ENCODE measurements at regions of chr20 and their contacts with region 1.

Region 1: GRCh38 chr20:2849529-2849928 is 9.0 kb downstream of the VPS16 start:
- DNase-seq: no peak
- ATAC-seq: no peak
- H3K4me3 ChIP-seq: no peak overlapping the region
- H3K27ac ChIP-seq: no peak overlapping the region
- H3K4me1 ChIP-seq: peaks cover 5% of the 10 kb centered on the region; the same call in 1 of the 2 replicates
- H3K27me3 ChIP-seq: no peaks in the 10 kb centered on the region
- CTCF ChIP-seq: no peak
- EP300 ChIP-seq: no peak
- POLR2A ChIP-seq: no peak
- RAD21 ChIP-seq: no peak

Region 2: DNA sequence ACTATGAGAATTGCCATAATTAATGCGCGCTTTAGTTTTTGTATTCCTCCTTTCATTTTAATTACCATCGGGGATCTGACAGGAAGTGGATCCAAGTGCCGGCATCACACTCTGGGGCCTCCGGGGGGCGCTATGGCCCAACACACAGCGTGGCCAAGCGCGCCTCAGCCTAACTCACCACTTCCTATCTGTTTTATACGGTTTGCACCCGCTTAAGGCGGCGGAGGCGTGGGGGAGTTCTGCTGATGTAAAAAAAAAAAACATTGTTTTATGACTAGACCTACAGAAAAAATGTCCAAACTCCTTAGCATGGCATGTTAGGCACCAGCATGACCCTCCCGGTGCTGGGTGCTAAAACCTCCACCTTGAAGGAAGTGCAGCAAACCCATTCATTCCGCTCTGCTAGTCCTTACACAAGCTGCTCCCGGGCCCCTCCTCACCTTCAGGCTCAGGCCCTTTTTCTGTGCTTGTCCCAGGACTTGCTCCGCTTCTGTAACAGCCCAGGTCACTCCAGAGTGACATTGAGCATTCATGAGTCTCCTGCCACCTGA is 161.4 kb before region 1 on chr20:
- CTCF ChIA-PET with region 1: interaction called, 11 read pairs
- POLR2A ChIA-PET with region 1: no interaction called
- RAD21 ChIA-PET with region 1: interaction called, 3 read pairs
- SMC1A ChIA-PET with region 1: no interaction called
- in situ Hi-C with region 1: no loop called
- intact Hi-C with region 1: no loop called
- DNase-seq: no peak
- ATAC-seq: peak; percentile 75
- H3K4me3 ChIP-seq: no peak overlapping the region
- H3K27ac ChIP-seq: no peak overlapping the region
- H3K4me1 ChIP-seq: no peaks in the 10 kb centered on the region
- H3K27me3 ChIP-seq: peaks cover 7 to 10% of the 10 kb centered on the region in 2 experiments
- CTCF ChIP-seq: peak; percentile 57 to 62 (median 57)
- EP300 ChIP-seq: no peak
- POLR2A ChIP-seq: no peak
- RAD21 ChIP-seq: peak; percentile 69

Region 3: DNA sequence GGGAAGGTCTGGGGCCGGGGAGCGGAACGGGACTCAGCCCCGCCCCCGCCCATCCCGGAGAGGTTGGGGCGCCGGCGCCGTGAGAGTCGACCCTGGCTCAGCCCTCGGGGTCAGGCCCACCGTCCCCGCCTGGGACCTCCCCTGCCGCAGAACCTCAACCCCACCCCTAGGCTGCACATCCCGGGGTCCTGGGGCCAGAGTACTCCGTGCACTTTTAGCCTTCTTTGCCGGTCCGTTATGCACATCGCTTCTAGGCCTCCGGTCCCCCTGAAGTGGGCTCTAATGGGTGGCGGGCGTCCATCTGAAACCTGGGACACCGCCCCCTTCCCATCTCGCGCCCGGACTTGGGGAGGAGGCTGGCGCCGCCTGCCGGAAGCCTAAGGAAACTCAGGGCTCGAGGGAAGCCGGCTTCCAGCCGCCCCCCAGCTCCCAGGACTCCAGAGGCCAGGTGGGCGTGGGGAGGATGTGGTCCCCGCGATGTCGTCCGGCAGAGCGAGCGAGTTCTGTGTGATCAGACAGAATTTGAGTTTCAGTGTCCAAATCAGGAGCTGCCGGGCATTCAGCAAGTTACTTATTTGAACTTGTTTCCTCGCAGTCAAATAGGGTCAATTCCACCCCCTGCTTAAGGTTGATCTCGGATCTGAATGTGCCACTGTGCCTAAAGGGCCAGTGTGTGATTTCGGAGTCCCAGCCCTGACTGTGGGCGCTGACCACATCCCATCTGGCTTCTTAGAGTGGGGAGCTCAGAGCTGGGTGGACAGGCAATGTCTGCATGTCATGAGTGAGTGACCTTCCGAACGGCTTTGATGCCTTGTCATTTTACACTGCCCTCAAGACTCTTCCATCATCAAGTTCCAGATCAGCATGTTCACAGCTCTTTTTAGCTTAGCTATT is 96.7 kb before region 1 on chr20:
- CTCF ChIA-PET with region 1: interaction called, 3 read pairs
- POLR2A ChIA-PET with region 1: no interaction called
- RAD21 ChIA-PET with region 1: interaction called, 3 read pairs
- SMC1A ChIA-PET with region 1: no interaction called
- in situ Hi-C with region 1: no loop called
- intact Hi-C with region 1: loop called (anchors 1 kb)
- DNase-seq: no peak
- ATAC-seq: peak; percentile 11; the same call in 1 of the 3 replicates
- H3K4me3 ChIP-seq: peak overlapping the region; percentile 41; the same call in 1 of the 2 replicates
- H3K27ac ChIP-seq: no peak overlapping the region
- H3K4me1 ChIP-seq: peaks cover 6% of the 10 kb centered on the region
- H3K27me3 ChIP-seq: peaks cover 9 to 12% of the 10 kb centered on the region in 2 experiments
- CTCF ChIP-seq: peak; percentile 36 to 70 (median 64)
- EP300 ChIP-seq: no peak
- POLR2A ChIP-seq: no peak
- RAD21 ChIP-seq: peak; percentile 23; the same call in 1 of the 2 replicates

Region 4: GRCh38 chr20:3340443-3340842 is 490.9 kb after region 1 on chr20:
- CTCF ChIA-PET with region 1: no interaction called
- POLR2A ChIA-PET with region 1: no interaction called
- RAD21 ChIA-PET with region 1: no interaction called
- SMC1A ChIA-PET with region 1: no interaction called
- in situ Hi-C with region 1: no loop called
- intact Hi-C with region 1: no loop called
- DNase-seq: no peak
- ATAC-seq: no peak
- H3K4me3 ChIP-seq: no peak overlapping the region
- H3K27ac ChIP-seq: no peak overlapping the region
- H3K4me1 ChIP-seq: no peaks in the 10 kb centered on the region
- H3K27me3 ChIP-seq: peaks cover 0 to 1% of the 10 kb centered on the region in 2 experiments; a peak in 2 of 4 replicates
- CTCF ChIP-seq: no peak
- EP300 ChIP-seq: no peak
- POLR2A ChIP-seq: no peak
- RAD21 ChIP-seq: no peak

Measured in GM12878 (cell line).